ENCODE measurements at regions of chr14 and their contacts with region 1.

Region 1: DNA sequence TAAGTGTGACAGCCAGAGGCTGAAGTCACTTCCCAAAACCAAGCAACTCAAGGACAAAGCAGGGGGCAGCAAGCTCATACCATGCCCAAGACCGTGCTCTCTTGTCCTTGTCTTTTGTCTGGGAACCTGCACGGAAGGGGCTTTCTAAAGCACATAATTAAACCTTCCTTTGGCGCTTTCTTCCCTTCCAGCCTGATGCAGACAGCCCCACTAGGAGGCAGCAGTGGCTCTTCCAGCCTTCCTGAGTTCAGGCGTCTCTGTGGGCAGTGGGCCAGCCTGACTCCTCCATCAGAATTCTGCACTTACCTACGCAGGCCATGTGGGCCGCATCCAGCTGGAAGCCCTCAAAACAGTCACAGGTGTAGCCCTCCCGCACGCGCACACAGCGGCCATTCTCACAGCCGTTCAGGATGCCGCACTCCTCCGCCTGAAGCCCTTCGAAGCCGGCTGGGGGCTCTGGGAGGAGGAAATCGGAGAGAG is 7.6 kb downstream of the ISCA2 start:
- DNase-seq: peak; percentile 76
- H3K4me3 ChIP-seq: no peak overlapping the region
- H3K27ac ChIP-seq: no peak overlapping the region
- H3K4me1 ChIP-seq: no peaks in the 10 kb centered on the region
- H3K27me3 ChIP-seq: no peaks in the 10 kb centered on the region
- CTCF ChIP-seq: peak; percentile 23 to 75 (median 59)
- POLR2A ChIP-seq: no peak

Region 2: DNA sequence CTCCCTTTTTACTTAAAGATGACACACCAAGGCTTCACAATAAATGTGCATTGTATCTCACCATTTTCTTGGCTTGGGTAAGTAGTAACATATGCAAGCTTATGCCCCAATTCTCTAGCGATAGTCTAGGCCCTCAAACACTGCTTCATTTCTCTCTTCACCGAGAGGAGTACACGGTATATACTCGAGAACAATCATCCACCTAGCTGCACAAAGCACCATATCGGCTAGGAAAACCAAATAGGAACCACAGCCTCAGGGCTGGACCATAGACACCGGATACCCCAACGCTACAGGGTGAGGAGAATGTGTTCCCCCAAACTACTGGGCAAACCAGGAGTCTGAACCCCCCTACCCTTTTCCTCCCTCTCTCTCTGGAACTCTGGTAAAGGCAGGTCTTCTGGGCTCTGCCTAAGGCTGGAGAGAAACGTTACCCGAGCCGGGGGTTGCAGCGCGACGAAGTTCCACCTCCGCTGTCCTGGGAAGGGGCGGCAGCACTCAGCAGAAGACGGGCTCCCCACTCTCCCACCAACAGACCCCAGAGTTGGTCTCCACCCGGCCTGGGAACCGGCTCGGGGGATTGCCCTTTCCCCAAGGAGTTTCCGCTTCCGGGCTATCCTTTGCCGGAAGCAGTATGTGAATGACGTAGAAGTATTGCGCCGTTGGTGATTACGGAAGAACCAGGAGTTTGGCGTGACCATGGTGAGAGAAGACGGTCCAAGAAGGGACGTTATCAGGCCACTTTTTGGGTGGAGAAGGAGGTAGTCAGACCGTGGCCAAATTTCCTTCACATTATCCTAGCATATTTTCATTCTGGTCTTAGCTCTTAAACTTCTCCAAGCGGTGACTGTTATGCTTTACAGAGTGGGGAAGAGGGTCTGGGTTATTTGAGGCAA is 211.6 kb after region 1 on chr14 and contains the starts of genes AREL1 and FCF1:
- intact Hi-C with region 1: no loop called
- DNase-seq: peak; percentile 83
- H3K4me3 ChIP-seq: peak within 1 kb of the TSS; percentile 53 to 72
- H3K27ac ChIP-seq: peak within 1 kb of the TSS; percentile 78 to 81
- H3K4me1 ChIP-seq: peaks cover 4% of the 10 kb centered on the region
- H3K27me3 ChIP-seq: no peaks in the 10 kb centered on the region
- CTCF ChIP-seq: peak in 2 of 4 experiments; percentile 14 to 16
- POLR2A ChIP-seq: peak; percentile 13
- total RNA-seq, gene AREL1: 14.8 to 51.2 TPM
- total RNA-seq, gene FCF1: 24.2 to 26.0 TPM

Region 3: DNA sequence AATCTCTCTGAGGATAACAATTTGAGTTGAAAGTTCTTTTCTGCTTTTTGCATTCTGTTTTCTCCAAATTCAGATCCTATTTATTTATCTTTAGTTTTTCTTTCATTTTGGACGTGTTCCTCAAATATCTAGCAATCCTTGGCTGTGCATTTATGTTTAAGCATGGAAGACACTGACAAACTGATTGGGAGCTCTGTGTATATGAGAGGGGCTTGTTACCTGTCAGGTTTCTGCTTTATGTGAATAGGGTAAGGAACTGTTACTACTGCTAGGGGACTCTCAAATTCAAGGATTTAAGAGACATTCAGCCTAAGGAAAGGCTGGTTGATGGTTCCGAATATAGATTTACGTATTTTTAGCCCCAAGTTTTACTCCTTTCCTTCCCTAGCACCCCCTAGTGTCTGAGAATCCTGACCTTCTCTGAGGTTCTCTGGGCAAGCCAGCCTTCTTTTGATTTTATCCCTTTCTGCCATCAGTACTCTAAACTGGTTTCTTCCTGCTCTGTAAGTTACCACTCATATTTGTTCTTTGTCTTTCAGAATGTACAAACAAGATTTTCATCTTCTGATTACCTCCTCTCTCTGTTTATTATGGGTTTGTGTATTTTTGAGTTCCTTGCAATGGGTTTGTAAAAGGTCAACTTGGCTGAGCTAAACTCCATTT is 292.5 kb after region 1 on chr14:
- intact Hi-C with region 1: loop called (anchors 10 kb)
- DNase-seq: no peak
- H3K4me3 ChIP-seq: no peak overlapping the region
- H3K27ac ChIP-seq: peak overlapping the region; percentile 6 to 39
- H3K4me1 ChIP-seq: peaks cover 4% of the 10 kb centered on the region
- H3K27me3 ChIP-seq: no peaks in the 10 kb centered on the region
- CTCF ChIP-seq: peak in 1 of 4 experiments; percentile 30
- POLR2A ChIP-seq: no peak

Region 4: DNA sequence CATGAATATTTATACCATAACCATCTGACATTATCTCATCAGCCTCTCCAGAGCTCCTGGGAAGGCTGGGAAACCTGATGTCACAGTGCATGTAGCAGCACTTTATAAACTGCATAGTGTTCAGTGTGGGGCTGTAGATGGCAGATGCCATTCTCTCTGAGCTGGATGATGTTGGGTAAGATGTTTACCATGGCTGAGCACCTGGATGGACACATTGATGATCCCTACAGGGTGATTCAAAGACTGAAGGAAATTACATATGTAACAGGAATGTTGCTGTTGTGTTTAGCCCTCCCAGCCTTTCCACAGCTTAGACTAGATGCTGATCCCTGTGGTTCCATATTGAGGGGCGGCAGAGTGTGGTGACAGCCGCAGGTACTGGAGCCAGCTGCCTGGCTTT is 1521.8 kb after region 1 on chr14:
- intact Hi-C with region 1: no loop called
- DNase-seq: no peak
- H3K4me3 ChIP-seq: no peak overlapping the region
- H3K27ac ChIP-seq: no peak overlapping the region
- H3K4me1 ChIP-seq: no peaks in the 10 kb centered on the region
- H3K27me3 ChIP-seq: no peaks in the 10 kb centered on the region
- CTCF ChIP-seq: no peak
- POLR2A ChIP-seq: no peak

Measured in prostate gland (tissue), 2 donors.